Psoas muscle (tissue), 8 donors: ENCODE measurements at regions of chr2 and their contacts with region 1.

Region 1: DNA sequence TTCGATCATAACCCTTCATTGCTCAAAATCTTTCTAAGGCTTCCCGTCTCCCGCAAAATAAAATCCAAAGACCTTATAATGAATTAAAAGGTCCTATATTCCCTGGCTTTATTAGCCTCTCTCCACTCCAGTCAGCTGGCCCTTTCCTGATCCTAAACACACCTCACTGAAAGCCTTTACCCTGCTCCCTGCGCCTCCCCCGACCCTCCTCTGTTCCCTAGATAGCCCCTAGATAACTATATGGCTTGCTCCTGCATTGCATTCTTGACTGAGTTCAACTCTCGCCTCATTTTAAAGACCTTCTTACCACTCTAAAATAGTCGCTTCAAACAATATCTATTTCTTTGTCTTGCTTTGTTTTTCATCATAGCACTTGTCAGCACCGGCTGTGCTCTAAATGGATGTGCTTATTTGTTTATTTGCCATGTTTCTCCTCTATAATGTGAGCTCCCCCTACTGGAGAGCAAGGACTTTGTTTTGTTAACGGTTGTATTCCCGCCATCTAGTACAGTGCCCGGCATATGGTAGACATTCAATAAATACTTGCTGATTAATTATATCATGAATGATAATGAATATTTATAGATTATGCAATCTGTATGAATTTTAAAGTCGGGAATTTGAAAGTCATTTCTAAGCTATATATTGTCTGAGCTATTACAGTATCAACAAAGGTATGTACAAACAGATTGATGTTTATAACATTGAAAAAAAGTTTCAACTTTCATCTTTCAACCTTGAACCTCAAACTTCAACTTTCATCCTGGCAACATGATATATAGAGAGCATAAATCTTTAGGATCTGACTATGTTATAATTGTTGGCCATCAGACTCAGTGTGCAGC is 32.4 kb upstream of the VIT start:
- DNase-seq: no peak
- ATAC-seq: peak; percentile 83 to 86 (median 85)
- H3K4me3 ChIP-seq: peak overlapping the region; percentile 37
- H3K27ac ChIP-seq: peak overlapping the region; percentile 62
- H3K4me1 ChIP-seq: peaks cover 15% of the 10 kb centered on the region
- H3K27me3 ChIP-seq: no peaks in the 10 kb centered on the region
- CTCF ChIP-seq: peak; percentile 88

Region 2: DNA sequence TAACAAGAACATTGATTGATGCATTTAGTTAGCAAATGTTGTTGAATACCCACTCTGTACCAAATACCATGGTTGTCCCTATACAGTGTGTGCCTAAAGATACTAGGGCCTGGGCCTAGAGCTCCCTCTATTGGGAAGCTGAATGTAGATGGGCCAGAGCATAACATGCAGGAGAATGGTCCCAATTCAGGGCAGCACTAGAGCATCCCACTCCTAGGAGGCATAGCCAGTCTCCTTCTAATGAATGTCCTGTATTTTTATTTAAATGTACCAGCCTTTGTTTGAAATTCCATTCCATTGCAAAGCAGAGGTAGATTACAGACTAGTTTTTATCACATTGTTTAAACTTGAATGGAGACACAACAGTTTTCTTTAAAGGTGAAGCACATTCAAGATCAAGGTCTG is 156.7 kb before region 1 on chr2:
- intact Hi-C with region 1: loop called in 1 of 2 experiments (anchors 10 kb)
- DNase-seq: no peak
- ATAC-seq: peak; percentile 48 to 85 (median 76)
- H3K4me3 ChIP-seq: no peak overlapping the region
- H3K27ac ChIP-seq: no peak overlapping the region
- H3K4me1 ChIP-seq: no peaks in the 10 kb centered on the region
- H3K27me3 ChIP-seq: no peaks in the 10 kb centered on the region
- CTCF ChIP-seq: peak; percentile 66

Region 3: DNA sequence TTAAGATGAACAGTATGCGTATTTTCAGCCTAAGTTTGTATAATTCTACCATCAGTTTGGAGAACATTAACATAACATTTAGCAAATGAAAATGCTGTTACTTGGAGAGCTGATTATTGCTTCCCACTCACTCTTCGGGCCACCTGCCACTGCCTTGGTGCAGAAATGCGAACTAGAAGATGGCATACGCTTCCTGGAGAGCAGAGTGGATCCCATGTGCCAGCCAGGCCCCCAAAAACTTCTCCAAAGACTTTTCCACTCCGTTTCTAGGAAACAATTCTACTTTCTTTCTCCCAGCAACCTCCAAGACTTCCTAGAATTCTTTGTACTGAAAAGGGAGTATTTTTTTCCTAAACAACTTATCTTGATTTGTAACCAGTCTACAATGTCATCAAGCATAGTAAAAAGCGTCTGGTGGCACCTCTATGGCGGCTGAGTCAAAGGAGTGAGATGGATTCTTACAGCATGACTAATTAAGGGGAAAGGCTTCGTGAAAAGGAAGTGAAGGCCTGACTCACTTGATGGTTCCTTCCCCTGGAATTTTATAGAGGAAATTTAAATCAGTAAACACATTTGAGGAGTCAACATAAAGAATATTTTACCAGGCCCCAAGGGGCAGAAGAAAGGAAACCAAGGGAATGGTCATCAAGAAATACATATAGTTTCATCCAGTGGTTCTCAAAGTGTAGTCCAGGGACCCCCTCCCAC is 102.7 kb before region 1 on chr2:
- intact Hi-C with region 1: loop called in 1 of 2 experiments (anchors 10 kb)
- DNase-seq: no peak
- ATAC-seq: peak; percentile 76 to 94 (median 87)
- H3K4me3 ChIP-seq: no peak overlapping the region
- H3K27ac ChIP-seq: peak overlapping the region; percentile 78
- H3K4me1 ChIP-seq: peaks cover 31% of the 10 kb centered on the region
- H3K27me3 ChIP-seq: no peaks in the 10 kb centered on the region
- CTCF ChIP-seq: no peak

Region 4: DNA sequence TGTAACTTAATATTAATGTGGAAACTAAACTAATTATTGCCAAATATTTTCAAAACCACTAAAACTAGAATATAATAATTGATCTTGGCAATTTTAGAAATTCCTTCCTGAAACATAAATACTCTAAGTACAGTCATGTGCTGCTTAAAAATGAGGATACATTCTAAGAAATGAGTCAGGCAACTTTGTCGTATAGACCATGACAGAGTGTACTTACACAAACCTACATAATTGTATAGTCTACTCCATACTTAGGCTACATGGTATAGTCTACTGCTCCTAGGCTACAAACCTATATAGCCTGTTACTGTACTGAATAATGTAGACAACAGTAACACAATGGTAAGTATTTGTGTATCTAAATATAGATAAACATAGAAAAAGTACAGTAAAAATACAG is 93.7 kb before region 1 on chr2:
- intact Hi-C with region 1: loop called (anchors 5 to 10 kb)
- DNase-seq: no peak
- ATAC-seq: no peak
- H3K4me3 ChIP-seq: no peak overlapping the region
- H3K27ac ChIP-seq: peak overlapping the region; percentile 72
- H3K4me1 ChIP-seq: peaks cover 44% of the 10 kb centered on the region
- H3K27me3 ChIP-seq: no peaks in the 10 kb centered on the region
- CTCF ChIP-seq: no peak

Region 5: DNA sequence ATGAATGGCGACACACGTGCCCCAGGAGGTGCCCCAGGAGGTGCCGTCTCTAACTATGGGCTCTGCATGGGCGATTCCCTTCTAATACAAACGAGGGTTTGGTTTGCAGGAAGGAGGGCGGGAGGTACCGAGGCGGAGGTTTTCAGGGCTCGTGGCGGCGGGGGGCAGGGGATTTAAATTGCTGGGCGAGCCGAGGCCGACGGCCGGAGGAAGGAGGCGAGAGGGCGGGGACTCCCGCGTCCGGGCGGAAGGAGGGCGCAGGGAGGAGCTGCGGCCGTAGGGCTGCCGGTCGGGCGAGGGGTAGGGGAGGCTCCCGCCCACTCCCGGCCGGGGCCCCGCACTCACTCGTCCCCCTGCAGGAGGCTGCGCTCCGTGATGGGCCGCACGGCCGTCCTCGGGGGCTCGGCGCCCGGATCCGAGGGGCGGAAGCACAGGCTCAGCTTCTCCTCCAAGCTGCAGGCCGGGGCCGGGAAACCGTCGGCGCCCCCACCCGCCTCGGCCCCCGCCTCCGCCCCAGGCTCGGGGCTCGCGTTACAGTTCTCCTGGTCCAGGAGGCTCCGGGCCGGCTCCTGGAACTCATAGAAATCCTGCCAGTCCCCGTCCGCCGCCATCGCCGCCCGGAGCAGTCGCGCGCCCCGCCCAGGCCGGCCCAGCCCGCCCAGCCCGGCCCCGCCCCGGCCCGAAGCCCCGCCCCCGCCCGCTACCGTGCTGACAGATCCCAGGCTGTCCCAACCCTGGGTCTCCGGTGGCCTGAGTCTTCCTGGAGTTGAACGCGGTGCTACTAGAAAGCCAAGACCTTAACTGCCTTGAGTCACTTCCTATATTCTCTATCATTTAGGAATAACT is 66.3 kb before region 1 on chr2 and contains the start of gene FEZ2:
- intact Hi-C with region 1: loop called in 1 of 2 experiments (anchors 5 kb)
- DNase-seq: peak; percentile 81 to 91
- ATAC-seq: peak; percentile 92 to 96 (median 94)
- H3K4me3 ChIP-seq: peak within 1 kb of the TSS; percentile 99
- H3K27ac ChIP-seq: peak within 1 kb of the TSS; percentile 97
- H3K4me1 ChIP-seq: peaks cover 28% of the 10 kb centered on the region
- H3K27me3 ChIP-seq: no peaks in the 10 kb centered on the region
- CTCF ChIP-seq: no peak
- total RNA-seq, gene FEZ2: 61.5 to 291 (median 181) TPM